ENCODE measurements at regions of chr3 and their contacts with region 1.

Region 1: DNA sequence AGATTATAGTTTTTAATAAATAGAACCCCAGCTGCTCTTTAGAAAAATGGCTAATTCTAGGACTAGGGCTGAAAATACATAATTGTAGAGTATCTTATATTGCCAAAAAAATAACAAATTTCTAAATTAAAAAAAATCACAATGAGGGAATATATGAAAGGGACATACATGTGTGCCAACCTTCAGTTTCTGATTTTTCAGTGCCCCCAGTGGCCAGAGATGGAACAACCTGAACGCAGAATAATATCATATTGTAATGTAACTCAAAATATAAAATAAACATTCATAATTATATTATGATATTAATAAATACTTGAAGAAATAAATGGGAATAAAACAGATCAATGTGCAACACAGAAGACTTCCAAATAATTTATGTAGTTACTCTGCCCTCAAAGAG is 460.5 kb downstream of the ZNF385D start:
- DNase-seq: peak; percentile 23
- ATAC-seq: no peak
- H3K4me3 ChIP-seq: no peak overlapping the region
- H3K27ac ChIP-seq: no peak overlapping the region
- H3K4me1 ChIP-seq: 0 out of 2 replicates have a peak, but pooled peaks cover 5% of the 10 kb centered on the region
- H3K27me3 ChIP-seq: no peaks in the 10 kb centered on the region
- CTCF ChIP-seq: peak; percentile 60

Region 2: GRCh38 chr3:20975188-20975651 is 315.3 kb before region 1 on chr3:
- CTCF ChIA-PET with region 1: no interaction called
- POLR2A ChIA-PET with region 1: no interaction called
- intact Hi-C with region 1: loop called (anchors 10 kb)
- DNase-seq: no peak
- ATAC-seq: no peak
- H3K4me3 ChIP-seq: no peak overlapping the region
- H3K27ac ChIP-seq: no peak overlapping the region
- H3K4me1 ChIP-seq: no peaks in the 10 kb centered on the region
- H3K27me3 ChIP-seq: no peaks in the 10 kb centered on the region; the same call in 1 of the 2 replicates
- CTCF ChIP-seq: no peak

Region 3: GRCh38 chr3:21356402-21356801 is 65.8 kb after region 1 on chr3:
- CTCF ChIA-PET with region 1: no interaction called
- POLR2A ChIA-PET with region 1: no interaction called
- intact Hi-C with region 1: no loop called
- DNase-seq: peak; percentile 44
- ATAC-seq: peak; percentile 49
- H3K4me3 ChIP-seq: no peak overlapping the region
- H3K27ac ChIP-seq: no peak overlapping the region
- H3K4me1 ChIP-seq: no peaks in the 10 kb centered on the region
- H3K27me3 ChIP-seq: no peaks in the 10 kb centered on the region
- CTCF ChIP-seq: no peak